Heart left ventricle (tissue), 16 donors: ENCODE measurements at regions of chr3 and their contacts with region 1.

Region 1: GRCh38 chr3:160885791-160886286 is 129.8 kb downstream of the PPM1L start:
- DNase-seq: peak; percentile 79 to 93 (median 84)
- ATAC-seq: peak; percentile 65 to 96 (median 91)
- H3K4me3 ChIP-seq: no peak overlapping the region
- H3K27ac ChIP-seq: peak overlapping the region in 2 of 12 donors; percentile 35 to 48
- H3K4me1 ChIP-seq: peaks cover 0 to 21% (median 3%) of the 10 kb centered on the region in 12 donors
- H3K27me3 ChIP-seq: no peaks in the 10 kb centered on the region
- CTCF ChIP-seq: peak in 1 of 12 donors; percentile 12
- POLR2A ChIP-seq: no peak

Region 2: DNA sequence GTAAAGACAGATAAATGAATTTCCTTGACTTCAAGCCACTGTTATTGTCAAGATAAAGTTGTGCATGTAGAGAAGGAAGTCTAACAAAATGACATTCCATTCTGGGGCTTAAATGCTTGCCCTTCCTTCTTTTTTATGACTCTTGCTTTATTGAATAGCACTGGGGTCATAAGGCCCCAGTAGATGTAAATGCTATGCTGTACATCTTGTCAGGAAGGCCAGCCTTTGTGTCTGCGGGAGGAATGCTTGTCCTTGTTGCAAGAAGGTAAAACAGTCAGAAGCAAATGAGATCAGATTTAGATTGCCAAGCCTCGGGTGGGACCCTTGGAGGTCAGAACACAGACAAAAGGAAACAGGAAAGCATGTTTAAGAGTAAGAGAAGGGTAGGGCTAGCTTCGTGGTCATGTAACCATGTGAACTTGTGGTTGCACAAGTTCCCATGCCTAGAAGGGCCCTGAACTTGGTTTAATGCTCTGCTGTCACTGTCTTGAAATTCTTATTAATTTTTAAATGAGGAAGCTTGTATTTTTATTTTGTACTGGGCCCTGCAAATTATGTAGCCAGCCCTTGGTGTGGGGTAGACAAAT is 48.4 kb before region 1 on chr3:
- intact Hi-C with region 1: loop called in 1 of 10 experiments (anchors 5 kb)
- DNase-seq: no peak
- ATAC-seq: peak in 2 of 4 donors; percentile 10 to 36
- H3K4me3 ChIP-seq: no peak overlapping the region
- H3K27ac ChIP-seq: peak overlapping the region in 1 of 12 donors; percentile 12
- H3K4me1 ChIP-seq: peaks cover 0 to 17% (median under 1%) of the 10 kb centered on the region in 12 donors
- H3K27me3 ChIP-seq: no peaks in the 10 kb centered on the region
- CTCF ChIP-seq: no peak
- POLR2A ChIP-seq: no peak